HAP-1 (cell line): ENCODE measurements at regions of chr9 and their contacts with region 1.

Region 1: DNA sequence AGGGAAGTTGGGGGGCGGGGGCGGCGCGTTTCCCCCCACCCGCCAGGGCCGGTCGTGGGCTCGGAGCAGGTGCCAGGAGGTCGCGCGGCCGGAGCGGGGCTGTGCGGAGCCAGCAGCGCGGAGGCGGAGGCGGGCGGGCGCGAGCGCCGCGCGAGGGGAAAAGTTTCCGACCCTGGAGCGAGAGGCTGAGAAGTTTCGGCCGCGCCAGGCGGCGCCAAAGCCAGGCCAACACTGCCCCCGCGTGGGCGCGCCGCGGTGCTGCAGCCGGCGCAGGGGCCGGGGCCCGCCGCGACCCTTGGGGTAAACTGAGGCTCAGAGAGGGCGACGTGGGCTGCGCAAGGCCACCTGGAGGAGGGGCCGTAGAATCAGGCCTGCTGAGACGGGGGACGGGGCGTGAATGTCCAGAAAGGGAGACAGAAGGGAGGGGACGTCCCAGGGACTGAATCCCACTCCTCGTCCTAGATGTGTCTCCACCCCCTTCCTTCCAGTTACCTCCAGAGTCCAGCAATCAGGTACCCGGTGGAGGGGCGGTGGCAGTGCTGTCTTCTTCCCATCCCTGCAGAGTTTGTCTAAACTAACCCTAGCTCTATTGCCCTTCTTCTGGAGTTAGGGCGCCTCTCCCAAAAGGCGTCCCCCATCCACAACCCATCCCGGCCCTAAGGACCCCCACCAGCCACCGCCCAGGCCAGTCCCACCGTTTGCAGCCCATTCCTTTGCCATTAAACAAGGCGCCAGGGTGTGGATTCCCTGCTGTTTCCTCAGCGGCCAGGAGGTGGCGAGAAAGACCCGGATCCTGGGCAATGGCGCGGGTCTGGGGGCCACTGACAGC is 10.2 kb downstream of the C9orf50 start:
- DNase-seq: peak; percentile 66 to 90
- H3K4me3 ChIP-seq: peak overlapping the region; percentile 33
- H3K4me1 ChIP-seq: peaks cover 9% of the 10 kb centered on the region
- H3K27me3 ChIP-seq: no peaks in the 10 kb centered on the region

Region 2: DNA sequence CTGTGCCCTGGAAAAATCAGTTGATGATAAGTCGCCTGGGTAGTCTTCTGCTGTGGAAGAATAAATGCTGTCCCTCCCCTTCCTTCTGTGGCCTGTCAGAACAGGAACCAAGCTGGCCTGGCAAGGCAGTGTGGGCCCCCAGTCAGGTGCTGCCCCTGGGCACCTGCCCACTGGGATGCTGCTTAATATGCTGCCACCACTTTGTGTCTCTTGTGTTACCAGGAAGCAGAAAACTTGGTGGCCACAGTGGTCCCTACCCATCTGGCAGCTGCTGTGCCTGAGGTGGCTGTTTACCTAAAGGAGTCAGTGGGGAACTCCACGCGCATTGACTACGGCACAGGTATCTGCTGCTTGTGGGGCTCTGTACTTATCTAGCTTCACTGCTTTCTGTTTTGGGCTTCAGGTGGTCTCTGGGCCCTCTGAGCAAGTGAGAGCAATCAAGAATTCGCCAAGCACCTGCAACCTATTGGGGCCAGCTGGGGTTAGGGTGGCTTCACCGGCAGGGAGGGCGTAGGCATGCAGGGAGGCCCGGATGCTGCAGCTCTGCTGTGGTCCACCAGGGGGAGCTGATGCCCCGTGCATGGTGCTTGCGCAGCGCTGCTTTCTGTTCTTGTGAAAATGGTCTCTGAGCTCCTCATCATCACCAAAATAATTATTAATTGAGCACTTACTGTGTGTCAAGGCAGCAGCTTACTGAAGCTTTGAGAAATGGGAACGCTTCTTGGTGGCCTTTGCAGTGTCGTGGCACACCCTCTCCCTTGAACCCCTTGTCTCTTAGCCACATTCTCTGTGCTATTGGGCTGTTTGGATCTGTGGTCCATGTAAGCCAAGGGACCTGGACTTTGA is 479.2 kb before region 1 on chr9:
- in situ Hi-C with region 1: loop called (anchors 5 kb)
- DNase-seq: peak; percentile 46 to 87
- H3K4me3 ChIP-seq: no peak overlapping the region
- H3K4me1 ChIP-seq: no peaks in the 10 kb centered on the region
- H3K27me3 ChIP-seq: no peaks in the 10 kb centered on the region

Region 3: GRCh38 chr9:129177791-129178559 is 432.7 kb before region 1 on chr9 and contains the start of gene IER5L:
- in situ Hi-C with region 1: loop called (anchors 10 kb)
- DNase-seq: peak; percentile 93 to 96
- H3K4me3 ChIP-seq: peak within 1 kb of the TSS; percentile 63
- H3K4me1 ChIP-seq: peaks cover 22% of the 10 kb centered on the region
- H3K27me3 ChIP-seq: peaks cover 3% of the 10 kb centered on the region; the same call in 1 of the 2 replicates

Region 4: DNA sequence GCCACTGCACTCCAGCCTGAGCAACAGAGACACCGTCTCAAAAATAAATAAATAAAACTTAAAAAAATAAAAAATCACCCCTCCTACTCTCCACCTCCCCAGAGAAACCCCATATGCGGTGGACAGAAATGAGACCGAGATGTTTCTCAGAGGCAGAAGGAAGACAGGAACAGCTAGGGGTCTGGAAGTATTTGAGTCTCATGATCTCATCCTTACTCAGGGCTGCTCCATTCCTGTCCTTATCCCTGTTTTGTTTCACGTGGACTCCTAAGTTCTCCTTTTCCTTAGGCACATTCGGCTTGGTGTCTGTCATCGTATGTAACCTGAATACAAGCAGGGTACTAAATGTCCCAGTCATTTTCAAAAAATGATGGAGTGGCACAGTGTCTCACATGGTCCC is 65.9 kb before region 1 on chr9:
- in situ Hi-C with region 1: no loop called
- DNase-seq: no peak
- H3K4me3 ChIP-seq: no peak overlapping the region
- H3K4me1 ChIP-seq: no peaks in the 10 kb centered on the region
- H3K27me3 ChIP-seq: no peaks in the 10 kb centered on the region

Region 5: DNA sequence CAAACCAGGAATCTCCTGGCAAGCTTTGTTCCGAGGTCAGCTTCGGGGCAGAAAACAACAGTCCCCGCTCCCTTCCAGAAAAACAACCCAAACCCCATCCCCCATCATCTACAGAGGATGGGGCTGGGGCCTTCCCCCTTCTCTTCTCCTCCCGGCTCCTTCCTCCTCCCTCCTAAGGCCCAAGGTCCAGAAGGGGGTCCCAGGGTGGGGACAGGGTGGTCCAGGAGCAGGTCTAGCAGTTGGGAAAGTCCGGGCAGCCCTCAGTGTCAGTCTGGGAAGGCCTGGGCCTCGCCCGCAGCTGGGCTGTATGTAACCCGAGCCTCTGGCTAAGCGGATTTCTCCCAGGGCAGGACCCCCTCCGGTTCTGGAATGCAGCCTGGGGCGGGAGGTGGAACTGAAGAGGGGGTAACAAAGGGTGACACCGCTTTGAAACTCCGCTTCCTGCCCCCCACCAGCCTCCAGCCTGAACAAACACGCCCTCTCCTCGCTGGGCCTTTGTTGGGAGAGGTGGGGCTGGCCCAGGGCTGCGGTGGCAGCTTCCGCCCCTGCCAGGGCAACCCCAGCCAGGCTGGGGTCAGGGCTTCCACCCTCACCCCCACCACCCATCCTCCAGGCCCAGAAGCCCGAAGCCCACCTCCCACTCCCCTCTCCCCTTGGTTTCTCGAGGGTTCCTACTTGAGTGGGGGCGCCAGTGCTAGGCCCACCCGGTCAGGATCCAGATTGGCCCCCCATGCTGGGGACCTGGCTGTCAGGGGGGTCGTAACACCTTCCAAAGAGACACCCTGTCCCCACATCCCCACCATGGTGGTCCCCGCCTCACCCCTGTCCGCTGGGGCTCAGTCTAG is 53.3 kb before region 1 on chr9:
- in situ Hi-C with region 1: no loop called
- DNase-seq: peak; percentile 87 to 94
- H3K4me3 ChIP-seq: no peak overlapping the region
- H3K4me1 ChIP-seq: peaks cover 24% of the 10 kb centered on the region
- H3K27me3 ChIP-seq: no peaks in the 10 kb centered on the region

Region 6: DNA sequence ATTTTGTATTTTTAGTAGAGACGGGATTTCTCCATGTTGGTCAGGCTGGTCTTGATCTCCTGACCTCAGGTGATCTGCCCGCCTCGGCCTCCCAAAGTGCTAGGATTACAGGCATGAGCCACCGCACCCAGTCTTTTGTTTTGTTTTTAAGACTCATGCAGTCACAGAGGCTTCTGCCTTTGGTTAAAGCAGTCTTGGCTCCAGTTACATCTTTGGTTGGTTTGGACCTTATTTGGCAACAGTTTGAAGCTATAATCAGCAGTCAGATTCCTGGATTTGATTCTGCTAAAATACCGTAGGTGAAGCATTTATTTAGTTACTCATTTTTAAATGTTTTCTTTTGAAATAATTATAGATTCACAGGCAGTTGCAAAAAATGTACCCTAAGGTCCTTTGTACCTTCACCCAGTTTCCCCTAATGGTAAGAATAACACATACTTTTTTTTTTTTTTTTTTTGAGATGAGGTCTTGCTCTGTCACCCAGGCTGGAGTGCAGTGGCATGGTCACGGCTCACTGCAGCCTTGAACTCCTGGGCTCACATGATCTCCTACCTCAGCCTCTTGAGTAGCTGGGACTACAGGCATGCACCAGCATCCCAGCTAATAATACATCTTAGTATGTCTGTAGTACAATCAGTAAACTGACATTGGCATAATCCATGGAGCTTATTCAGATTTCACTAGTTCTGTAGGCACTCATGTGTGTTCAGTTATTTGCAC is 240.3 kb after region 1 on chr9:
- in situ Hi-C with region 1: no loop called
- DNase-seq: no peak
- H3K4me3 ChIP-seq: no peak overlapping the region
- H3K4me1 ChIP-seq: no peaks in the 10 kb centered on the region
- H3K27me3 ChIP-seq: no peaks in the 10 kb centered on the region